Activated CD8-positive, alpha-beta T cell treated with anti-CD3 and anti-CD28 coated beads for 36 hours (primary cell): ENCODE measurements at regions of chr12 and their contacts with region 1.

Region 1: DNA sequence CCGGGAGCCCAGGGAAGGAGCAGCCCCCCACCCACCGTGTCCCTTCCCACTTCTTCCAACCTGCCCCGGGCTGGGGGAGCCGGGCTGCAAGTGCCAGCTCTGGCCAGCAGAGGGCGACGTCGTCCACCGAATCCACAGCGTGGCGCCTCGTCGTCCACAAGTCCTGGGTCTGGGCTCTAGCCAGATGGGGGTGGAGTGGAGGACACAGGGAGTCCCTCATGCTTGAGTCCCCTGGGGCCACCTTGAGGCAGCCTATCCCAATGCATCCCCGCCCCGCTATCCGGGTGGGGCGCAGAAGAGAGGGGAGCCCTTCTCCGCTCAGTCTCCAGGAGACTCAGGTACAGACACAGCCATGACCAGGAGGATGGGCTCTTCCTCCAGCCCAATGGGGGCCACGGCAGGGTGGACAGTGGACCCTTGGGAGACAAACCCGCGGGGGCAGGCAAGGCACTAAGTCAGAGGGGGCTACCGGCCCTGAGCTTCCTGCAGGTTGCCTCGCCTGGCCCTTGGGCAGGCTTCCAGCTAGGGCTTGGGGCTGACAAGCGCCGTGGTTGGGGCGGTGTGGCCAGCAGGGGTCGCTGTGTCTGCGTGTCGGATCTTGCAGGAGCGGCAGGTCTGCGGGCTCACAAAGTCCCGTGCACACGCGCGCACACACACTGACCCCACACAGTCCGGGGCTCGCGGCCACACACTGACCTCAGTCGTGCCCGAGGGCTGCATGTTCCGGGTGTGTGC is 5.5 kb downstream of the AQP5 start:
- DNase-seq: peak; percentile 96
- ATAC-seq: peak; percentile 89
- H3K4me3 Mint-ChIP-seq: peak overlapping the region; percentile 61
- H3K27ac Mint-ChIP-seq: no peak overlapping the region
- H3K4me1 Mint-ChIP-seq: no peaks in the 10 kb centered on the region
- H3K27me3 Mint-ChIP-seq: peaks cover 24% of the 10 kb centered on the region
- CTCF ChIP-seq: peak; percentile 92

Region 2: GRCh38 chr12:49567611-49568441 is 399.4 kb before region 1 on chr12 and contains the start of gene MCRS1:
- CTCF ChIA-PET with region 1: no interaction called
- POLR2A ChIA-PET with region 1: no interaction called
- intact Hi-C with region 1: no loop called
- DNase-seq: peak; percentile 93
- ATAC-seq: peak; percentile 92
- H3K4me3 Mint-ChIP-seq: peak within 1 kb of the TSS; percentile 100
- H3K27ac Mint-ChIP-seq: peak within 1 kb of the TSS; percentile 96
- H3K4me1 Mint-ChIP-seq: peaks cover 50% of the 10 kb centered on the region
- H3K27me3 Mint-ChIP-seq: no peaks in the 10 kb centered on the region
- CTCF ChIP-seq: no peak
- total RNA-seq, gene MCRS1: 57.1 to 61.1 TPM

Region 3: GRCh38 chr12:49909826-49910225 is 57.4 kb before region 1 on chr12:
- CTCF ChIA-PET with region 1: interaction called, 13 read pairs
- POLR2A ChIA-PET with region 1: no interaction called
- intact Hi-C with region 1: no loop called
- DNase-seq: peak; percentile 37
- ATAC-seq: no peak
- H3K4me3 Mint-ChIP-seq: no peak overlapping the region
- H3K27ac Mint-ChIP-seq: no peak overlapping the region
- H3K4me1 Mint-ChIP-seq: no peaks in the 10 kb centered on the region
- H3K27me3 Mint-ChIP-seq: peaks cover 4% of the 10 kb centered on the region
- CTCF ChIP-seq: no peak

Region 4: GRCh38 chr12:49945394-49946080 is 21.7 kb before region 1 on chr12:
- CTCF ChIA-PET with region 1: interaction called, 128 read pairs
- POLR2A ChIA-PET with region 1: interaction called, 5 read pairs
- intact Hi-C with region 1: no loop called
- DNase-seq: peak; percentile 93
- ATAC-seq: peak; percentile 99
- H3K4me3 Mint-ChIP-seq: peak overlapping the region; percentile 76
- H3K27ac Mint-ChIP-seq: peak overlapping the region; percentile 91
- H3K4me1 Mint-ChIP-seq: peaks cover 25% of the 10 kb centered on the region
- H3K27me3 Mint-ChIP-seq: no peaks in the 10 kb centered on the region
- CTCF ChIP-seq: peak; percentile 89

Region 5: DNA sequence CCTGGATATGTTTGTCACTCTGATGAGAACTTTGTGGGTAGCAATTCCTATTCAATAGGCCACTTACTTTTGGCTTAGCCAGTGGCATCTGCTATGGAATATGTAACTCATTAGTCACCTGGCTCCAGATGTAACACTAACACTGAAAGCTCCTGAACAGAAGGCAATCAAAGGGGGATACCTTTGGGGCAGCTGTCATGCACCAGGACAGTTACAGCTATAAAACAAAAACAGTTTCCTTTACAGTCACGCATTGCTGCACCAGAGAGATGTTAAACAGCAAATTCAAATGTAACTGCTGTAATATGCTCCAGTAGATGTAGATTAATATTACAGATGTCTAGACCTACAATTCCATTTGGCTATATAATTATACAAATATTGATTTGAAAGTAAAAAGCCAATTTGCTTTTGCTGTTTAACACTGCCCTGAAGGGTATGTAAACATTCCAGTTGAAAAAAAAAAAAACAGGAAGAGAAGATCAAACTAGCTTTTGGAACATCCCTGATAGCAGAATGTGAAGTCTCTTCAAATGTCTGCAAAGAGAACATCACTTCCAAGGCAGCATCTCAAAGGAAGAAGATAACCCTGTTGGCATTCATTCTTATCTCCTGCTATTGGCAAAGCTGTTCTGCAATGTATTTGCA is 39.7 kb after region 1 on chr12:
- CTCF ChIA-PET with region 1: interaction called, 20 read pairs
- POLR2A ChIA-PET with region 1: no interaction called
- intact Hi-C with region 1: no loop called
- DNase-seq: no peak
- ATAC-seq: no peak
- H3K4me3 Mint-ChIP-seq: no peak overlapping the region
- H3K27ac Mint-ChIP-seq: no peak overlapping the region
- H3K4me1 Mint-ChIP-seq: peaks cover 4% of the 10 kb centered on the region
- H3K27me3 Mint-ChIP-seq: no peaks in the 10 kb centered on the region
- CTCF ChIP-seq: no peak

Region 6: GRCh38 chr12:50038336-50038735 is 71.1 kb after region 1 on chr12:
- CTCF ChIA-PET with region 1: interaction called, 54 read pairs
- POLR2A ChIA-PET with region 1: no interaction called
- intact Hi-C with region 1: no loop called
- DNase-seq: no peak
- ATAC-seq: no peak
- H3K4me3 Mint-ChIP-seq: no peak overlapping the region
- H3K27ac Mint-ChIP-seq: no peak overlapping the region
- H3K4me1 Mint-ChIP-seq: peaks cover 12% of the 10 kb centered on the region
- H3K27me3 Mint-ChIP-seq: peaks cover 9% of the 10 kb centered on the region
- CTCF ChIP-seq: no peak

Region 7: DNA sequence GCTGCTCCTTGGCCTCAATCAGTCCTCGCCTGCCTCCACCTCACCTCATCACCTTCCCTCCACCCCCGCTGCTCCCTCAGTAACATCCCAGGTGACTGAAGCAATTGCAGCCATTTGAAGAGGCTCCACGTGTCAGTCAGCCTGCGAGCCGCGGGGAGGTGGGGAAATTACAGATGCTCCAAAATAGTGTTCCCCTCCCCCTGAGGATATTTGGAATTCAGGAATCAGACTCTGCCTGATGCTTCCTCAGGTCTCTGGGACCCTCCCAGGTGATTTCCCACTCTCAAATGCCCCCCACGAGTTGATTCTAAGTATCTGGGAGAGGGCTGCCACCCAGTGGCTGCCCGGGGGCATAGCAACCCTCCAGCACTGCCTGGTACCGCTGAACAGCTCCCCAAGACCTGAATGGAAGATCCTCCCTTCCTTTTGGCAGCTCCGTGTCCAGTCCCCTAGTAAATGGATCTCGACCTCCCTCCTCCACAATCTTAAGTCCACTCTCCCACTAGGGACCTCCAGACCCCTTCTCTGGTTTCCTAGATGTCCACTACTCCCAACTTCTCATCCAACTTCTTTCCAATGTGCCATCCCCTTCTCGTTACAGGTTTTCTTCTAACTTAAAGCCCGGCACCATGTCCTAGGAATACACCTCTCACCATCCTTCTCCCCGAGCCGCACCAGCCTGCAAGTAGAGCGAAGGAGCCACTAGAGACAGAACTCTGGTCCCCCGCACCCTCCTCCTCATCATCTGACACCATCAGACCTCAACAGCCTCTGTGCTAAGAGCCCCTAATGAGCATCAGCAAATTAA is 88.8 kb after region 1 on chr12:
- CTCF ChIA-PET with region 1: interaction called, 47 read pairs
- POLR2A ChIA-PET with region 1: interaction called, 4 read pairs
- intact Hi-C with region 1: loop called (anchors 5 kb)
- DNase-seq: peak; percentile 74
- ATAC-seq: peak; percentile 46
- H3K4me3 Mint-ChIP-seq: peak overlapping the region; percentile 45
- H3K27ac Mint-ChIP-seq: peak overlapping the region; percentile 39
- H3K4me1 Mint-ChIP-seq: peaks cover 41% of the 10 kb centered on the region
- H3K27me3 Mint-ChIP-seq: peaks cover 28% of the 10 kb centered on the region
- CTCF ChIP-seq: peak; percentile 98

Region 8: GRCh38 chr12:50084775-50085614 is 117.8 kb after region 1 on chr12 and contains the start of gene SMARCD1:
- CTCF ChIA-PET with region 1: interaction called, 16 read pairs
- POLR2A ChIA-PET with region 1: no interaction called
- intact Hi-C with region 1: no loop called
- DNase-seq: peak; percentile 90
- ATAC-seq: peak; percentile 88
- H3K4me3 Mint-ChIP-seq: peak within 1 kb of the TSS; percentile 90
- H3K27ac Mint-ChIP-seq: peak within 1 kb of the TSS; percentile 93
- H3K4me1 Mint-ChIP-seq: peaks cover 44% of the 10 kb centered on the region
- H3K27me3 Mint-ChIP-seq: no peaks in the 10 kb centered on the region
- CTCF ChIP-seq: no peak
- total RNA-seq, gene SMARCD1: 47.3 to 55.1 TPM